ENCODE measurements at regions of chr2 and their contacts with region 1.

Region 1: GRCh38 chr2:152166633-152167032 is 8.9 kb downstream of the STAM2 start:
- DNase-seq: no peak
- H3K4me3 ChIP-seq: no peak overlapping the region
- H3K27ac ChIP-seq: no peak overlapping the region
- H3K4me1 ChIP-seq: peaks cover 14% of the 10 kb centered on the region
- H3K27me3 ChIP-seq: no peaks in the 10 kb centered on the region
- CTCF ChIP-seq: no peak
- POLR2A ChIP-seq: no peak

Region 2: DNA sequence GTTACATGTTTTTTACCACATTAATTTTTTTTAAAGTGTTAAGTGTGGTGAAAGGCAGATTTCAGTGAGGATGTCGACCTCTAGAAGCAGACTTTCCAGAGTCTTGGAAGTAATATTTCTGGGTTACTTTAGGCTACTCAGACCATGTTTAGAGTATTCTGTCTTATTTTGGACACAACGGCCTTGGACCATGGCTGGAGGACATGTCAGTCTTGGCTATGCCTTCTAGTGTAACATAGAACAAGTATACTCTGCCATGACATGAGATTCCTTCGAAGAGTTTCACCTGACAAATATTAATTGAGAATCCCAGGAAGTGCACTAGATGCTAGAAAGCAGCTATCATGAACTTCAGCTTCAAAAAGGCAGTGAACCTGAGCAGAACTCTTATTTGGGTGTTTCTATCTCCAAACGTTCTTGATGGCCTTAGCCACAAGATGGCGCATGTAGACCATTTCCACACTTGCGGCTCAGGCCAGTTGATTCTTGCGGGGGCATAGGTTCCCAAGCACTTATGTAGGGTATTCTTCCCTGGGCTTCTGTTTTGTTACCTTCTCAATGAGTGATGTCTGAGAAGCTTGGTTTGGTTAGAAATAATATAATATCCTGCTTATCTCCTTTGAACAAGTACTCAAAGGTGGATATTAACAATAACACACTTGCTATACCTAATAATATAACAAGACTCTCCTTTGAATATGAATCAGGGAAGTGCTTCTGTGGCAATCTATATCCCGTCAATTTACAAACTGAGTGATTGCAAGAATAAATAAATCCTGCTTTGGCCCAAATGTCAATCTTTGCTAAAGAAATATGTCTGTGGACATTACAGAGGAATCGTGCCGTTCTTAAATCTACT is 129.8 kb before region 1 on chr2:
- intact Hi-C with region 1: loop called (anchors 10 kb)
- DNase-seq: peak; percentile 88
- H3K4me3 ChIP-seq: no peak overlapping the region
- H3K27ac ChIP-seq: no peak overlapping the region
- H3K4me1 ChIP-seq: peaks cover 22% of the 10 kb centered on the region
- H3K27me3 ChIP-seq: no peaks in the 10 kb centered on the region
- CTCF ChIP-seq: peak; percentile 60 to 71 (median 66)
- POLR2A ChIP-seq: no peak